CD8-positive, alpha-beta T cell (primary cell): ENCODE measurements at regions of chr17 and their contacts with region 1.

Region 1: GRCh38 chr17:2215616-2216364 is 87.8 kb downstream of the SMG6 start:
- DNase-seq: peak; percentile 44 to 90 (median 75)
- ATAC-seq: peak; percentile 94
- H3K4me3 ChIP-seq: peak overlapping the region; percentile 30 to 42
- H3K4me3 Mint-ChIP-seq: peak overlapping the region; percentile 69
- H3K27ac ChIP-seq: peak overlapping the region; percentile 71 to 89
- H3K27ac Mint-ChIP-seq: peak overlapping the region; percentile 94
- H3K4me1 ChIP-seq: peaks cover 50% of the 10 kb centered on the region
- H3K4me1 Mint-ChIP-seq: peaks cover 61% of the 10 kb centered on the region
- H3K27me3 ChIP-seq: no peaks in the 10 kb centered on the region
- H3K27me3 Mint-ChIP-seq: no peaks in the 10 kb centered on the region
- CTCF ChIP-seq: no peak

Region 2: GRCh38 chr17:2137342-2138098 is 78.3 kb before region 1 on chr17:
- CTCF ChIA-PET with region 1: no interaction called
- POLR2A ChIA-PET with region 1: no interaction called
- intact Hi-C with region 1: loop called in 1 of 2 experiments (anchors 5 kb)
- DNase-seq: peak in 1 of 9 experiments; percentile 22
- ATAC-seq: no peak
- H3K4me3 ChIP-seq: no peak overlapping the region
- H3K4me3 Mint-ChIP-seq: no peak overlapping the region
- H3K27ac ChIP-seq: no peak overlapping the region
- H3K27ac Mint-ChIP-seq: no peak overlapping the region
- H3K4me1 ChIP-seq: peaks cover 13% of the 10 kb centered on the region
- H3K4me1 Mint-ChIP-seq: peaks cover 15% of the 10 kb centered on the region
- H3K27me3 ChIP-seq: no peaks in the 10 kb centered on the region
- H3K27me3 Mint-ChIP-seq: no peaks in the 10 kb centered on the region
- CTCF ChIP-seq: no peak

Region 3: DNA sequence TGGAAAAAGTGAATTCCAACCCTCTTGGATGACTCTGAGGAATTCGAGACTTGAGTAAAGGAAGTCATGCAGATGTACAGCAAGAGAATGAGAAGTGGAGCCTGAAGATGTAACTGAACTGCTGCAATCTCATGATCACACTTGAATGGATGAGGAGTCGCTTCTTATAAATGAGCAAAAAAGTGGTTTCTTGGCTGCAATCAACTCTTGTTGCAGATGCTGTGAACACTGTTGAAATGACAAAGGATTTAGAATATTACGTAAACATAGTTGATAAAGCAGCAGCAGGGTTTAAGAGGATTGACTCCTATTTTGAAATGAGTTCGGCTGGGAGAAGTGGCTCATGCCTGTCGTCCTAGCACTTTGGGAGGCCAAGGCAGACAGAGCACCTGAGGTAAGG is 1285.6 kb after region 1 on chr17:
- CTCF ChIA-PET with region 1: no interaction called
- POLR2A ChIA-PET with region 1: no interaction called
- intact Hi-C with region 1: no loop called
- DNase-seq: no peak
- ATAC-seq: no peak
- H3K4me3 ChIP-seq: no peak overlapping the region
- H3K4me3 Mint-ChIP-seq: no peak overlapping the region
- H3K27ac ChIP-seq: no peak overlapping the region
- H3K27ac Mint-ChIP-seq: no peak overlapping the region
- H3K4me1 ChIP-seq: no peaks in the 10 kb centered on the region
- H3K4me1 Mint-ChIP-seq: no peaks in the 10 kb centered on the region
- H3K27me3 ChIP-seq: no peaks in the 10 kb centered on the region
- H3K27me3 Mint-ChIP-seq: peaks cover 6% of the 10 kb centered on the region
- CTCF ChIP-seq: no peak